ENCODE measurements at regions of chr20 and their contacts with region 1.

Region 1: GRCh38 chr20:40778894-40779496 is 90.0 kb upstream of the MAFB start:
- DNase-seq: no peak
- H3K4me3 ChIP-seq: no peak overlapping the region
- H3K27ac ChIP-seq: no peak overlapping the region
- H3K4me1 ChIP-seq: no peaks in the 10 kb centered on the region
- H3K27me3 ChIP-seq: no peaks in the 10 kb centered on the region
- CTCF ChIP-seq: no peak

Region 2: GRCh38 chr20:40741507-40742106 is 37.4 kb before region 1 on chr20:
- CTCF ChIA-PET with region 1: no interaction called
- dilution Hi-C with region 1: loop called (anchors 5 kb)
- in situ Hi-C with region 1: no loop called
- intact Hi-C with region 1: no loop called
- DNase-seq: peak; percentile 37
- H3K4me3 ChIP-seq: no peak overlapping the region
- H3K27ac ChIP-seq: no peak overlapping the region
- H3K4me1 ChIP-seq: no peaks in the 10 kb centered on the region
- H3K27me3 ChIP-seq: peaks cover 1% of the 10 kb centered on the region
- CTCF ChIP-seq: peak; percentile 80 to 92